ENCODE measurements at regions of chr4 and their contacts with region 1.

Region 1: GRCh38 chr4:150867148-150867547 is 147.9 kb downstream of the LRBA start:
- DNase-seq: peak in 14 of 35 experiments; percentile 3 to 85 (median 22)
- ATAC-seq: peak; percentile 67 to 80 (median 70)
- H3K4me3 ChIP-seq: no peak overlapping the region
- H3K4me3 Mint-ChIP-seq: no peak overlapping the region
- H3K27ac ChIP-seq: no peak overlapping the region
- H3K27ac Mint-ChIP-seq: no peak overlapping the region
- H3K4me1 ChIP-seq: no peaks in the 10 kb centered on the region
- H3K4me1 Mint-ChIP-seq: no peaks in the 10 kb centered on the region
- H3K27me3 ChIP-seq: no peaks in the 10 kb centered on the region
- H3K27me3 Mint-ChIP-seq: no peaks in the 10 kb centered on the region

Region 2: DNA sequence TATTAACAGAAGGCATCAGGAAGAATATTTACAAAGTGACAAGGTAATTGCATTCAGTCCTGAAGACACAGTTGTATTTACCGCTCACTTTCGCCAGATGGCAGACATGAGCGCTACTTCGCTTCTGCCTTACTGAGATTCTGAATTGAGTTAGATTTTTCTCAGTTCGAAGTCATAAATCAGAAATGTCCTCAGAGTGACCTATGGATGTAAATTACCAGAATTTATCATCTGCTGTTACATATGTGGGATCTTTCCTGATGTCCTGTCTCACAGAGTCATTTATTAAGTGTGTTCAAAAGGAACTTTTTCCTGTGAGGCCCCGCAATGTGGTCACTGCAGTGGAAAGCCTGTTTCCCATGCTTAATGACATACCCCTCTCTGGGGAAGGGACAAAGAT is 886.2 kb before region 1 on chr4:
- CTCF ChIA-PET with region 1: interaction called, 7 to 38 read pairs
- POLR2A ChIA-PET with region 1: no interaction called
- DNase-seq: peak in 27 of 35 experiments; percentile 1 to 63 (median 20)
- ATAC-seq: peak in 2 of 4 experiments; percentile 47 to 56
- H3K4me3 ChIP-seq: no peak overlapping the region
- H3K4me3 Mint-ChIP-seq: no peak overlapping the region
- H3K27ac ChIP-seq: no peak overlapping the region
- H3K27ac Mint-ChIP-seq: no peak overlapping the region
- H3K4me1 ChIP-seq: no peaks in the 10 kb centered on the region
- H3K4me1 Mint-ChIP-seq: peaks cover 0 to 5% (median 4%) of the 10 kb centered on the region in 3 donors
- H3K27me3 ChIP-seq: peaks cover 0 to 2% of the 10 kb centered on the region in 2 experiments
- H3K27me3 Mint-ChIP-seq: no peaks in the 10 kb centered on the region

Region 3: GRCh38 chr4:150297861-150298474 is 569.2 kb before region 1 on chr4:
- CTCF ChIA-PET with region 1: interaction called, 6 to 39 read pairs
- POLR2A ChIA-PET with region 1: no interaction called
- DNase-seq: peak in 11 of 35 experiments; percentile 1 to 44 (median 13)
- ATAC-seq: peak in 1 of 4 experiments; percentile 36
- H3K4me3 ChIP-seq: no peak overlapping the region
- H3K4me3 Mint-ChIP-seq: no peak overlapping the region
- H3K27ac ChIP-seq: no peak overlapping the region
- H3K27ac Mint-ChIP-seq: no peak overlapping the region
- H3K4me1 ChIP-seq: no peaks in the 10 kb centered on the region
- H3K4me1 Mint-ChIP-seq: peaks cover 3 to 6% (median 6%) of the 10 kb centered on the region in 3 donors
- H3K27me3 ChIP-seq: no peaks in the 10 kb centered on the region
- H3K27me3 Mint-ChIP-seq: no peaks in the 10 kb centered on the region

Region 4: DNA sequence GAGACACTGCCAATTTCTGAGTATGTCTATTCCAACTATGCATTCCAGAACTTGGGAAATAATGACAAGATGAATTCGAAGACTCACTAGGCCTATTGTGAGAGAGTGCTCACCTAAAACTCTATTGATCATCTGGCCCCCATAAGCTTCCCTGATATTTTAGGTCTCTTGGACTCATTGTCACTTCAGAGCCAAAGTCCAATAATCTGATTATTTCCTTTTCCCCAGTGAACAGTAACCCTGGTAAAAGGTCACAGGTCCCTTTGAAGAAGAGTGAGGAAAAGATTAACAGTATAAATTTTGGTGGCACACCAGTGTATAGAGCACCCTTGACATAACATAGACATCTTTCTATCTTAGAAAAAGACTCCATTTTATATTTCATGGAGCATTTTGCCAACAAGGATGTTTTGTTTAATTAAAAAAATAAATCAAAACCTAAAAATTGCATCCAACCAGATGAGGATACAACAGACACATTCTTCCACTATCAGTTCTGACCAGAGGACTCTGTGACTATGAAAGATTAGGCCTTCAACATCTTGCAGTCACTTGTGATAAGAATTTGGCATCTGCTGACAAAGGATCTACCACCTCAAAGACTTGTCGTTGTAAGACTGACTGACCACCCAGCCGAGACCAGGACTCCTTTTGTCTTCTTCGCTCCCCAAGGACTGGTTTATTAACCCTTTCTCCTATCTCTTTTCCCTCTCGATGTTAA is 93.3 kb before region 1 on chr4:
- CTCF ChIA-PET with region 1: no interaction called
- POLR2A ChIA-PET with region 1: no interaction called
- DNase-seq: no peak
- ATAC-seq: no peak
- H3K4me3 ChIP-seq: no peak overlapping the region
- H3K4me3 Mint-ChIP-seq: no peak overlapping the region
- H3K27ac ChIP-seq: no peak overlapping the region
- H3K27ac Mint-ChIP-seq: no peak overlapping the region
- H3K4me1 ChIP-seq: no peaks in the 10 kb centered on the region
- H3K4me1 Mint-ChIP-seq: peaks cover 3 to 11% (median 7%) of the 10 kb centered on the region in 3 donors
- H3K27me3 ChIP-seq: no peaks in the 10 kb centered on the region
- H3K27me3 Mint-ChIP-seq: no peaks in the 10 kb centered on the region

Region 5: GRCh38 chr4:150818661-150819060 is 48.5 kb before region 1 on chr4:
- CTCF ChIA-PET with region 1: interaction called, 4 to 12 read pairs
- POLR2A ChIA-PET with region 1: no interaction called
- DNase-seq: no peak
- ATAC-seq: no peak
- H3K4me3 ChIP-seq: no peak overlapping the region
- H3K4me3 Mint-ChIP-seq: no peak overlapping the region
- H3K27ac ChIP-seq: no peak overlapping the region
- H3K27ac Mint-ChIP-seq: no peak overlapping the region
- H3K4me1 ChIP-seq: peaks cover 0 to 3% of the 10 kb centered on the region in 2 experiments
- H3K4me1 Mint-ChIP-seq: peaks cover 4 to 17% (median 11%) of the 10 kb centered on the region in 3 donors
- H3K27me3 ChIP-seq: no peaks in the 10 kb centered on the region
- H3K27me3 Mint-ChIP-seq: no peaks in the 10 kb centered on the region

Region 6: DNA sequence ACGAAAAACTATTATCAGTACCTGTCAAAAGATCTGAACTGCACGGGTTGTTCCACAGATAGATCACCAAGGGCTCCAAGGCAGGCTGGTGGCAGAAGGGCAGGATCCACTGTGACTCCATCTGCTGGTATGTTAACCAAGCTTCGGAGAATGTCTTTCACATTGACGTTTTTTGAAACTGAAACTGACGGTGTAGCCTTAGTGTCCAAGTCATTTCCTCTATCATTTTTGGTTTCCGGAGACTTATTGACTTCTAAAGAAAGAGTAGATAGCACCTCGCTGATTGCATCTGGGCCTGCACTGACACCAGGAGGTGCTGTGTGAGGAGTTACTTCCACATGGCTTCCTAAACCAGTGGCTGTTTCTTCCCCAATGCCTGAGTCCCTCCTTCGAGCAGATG is 39.0 kb before region 1 on chr4:
- CTCF ChIA-PET with region 1: interaction called, 5 to 19 read pairs
- POLR2A ChIA-PET with region 1: interaction called in 1 of 2 experiments, 3 read pairs
- DNase-seq: peak in 34 of 35 experiments; percentile 5 to 81 (median 46)
- ATAC-seq: peak; percentile 67 to 94 (median 82)
- H3K4me3 ChIP-seq: peak overlapping the region in 1 of 2 donors; percentile 48
- H3K4me3 Mint-ChIP-seq: peak overlapping the region; percentile 33 to 71 (median 68)
- H3K27ac ChIP-seq: peak overlapping the region; percentile 83
- H3K27ac Mint-ChIP-seq: peak overlapping the region; percentile 78 to 88
- H3K4me1 ChIP-seq: peaks cover 0 to 18% of the 10 kb centered on the region in 2 experiments
- H3K4me1 Mint-ChIP-seq: peaks cover 30 to 54% (median 52%) of the 10 kb centered on the region in 3 donors
- H3K27me3 ChIP-seq: no peaks in the 10 kb centered on the region
- H3K27me3 Mint-ChIP-seq: no peaks in the 10 kb centered on the region

Region 7: DNA sequence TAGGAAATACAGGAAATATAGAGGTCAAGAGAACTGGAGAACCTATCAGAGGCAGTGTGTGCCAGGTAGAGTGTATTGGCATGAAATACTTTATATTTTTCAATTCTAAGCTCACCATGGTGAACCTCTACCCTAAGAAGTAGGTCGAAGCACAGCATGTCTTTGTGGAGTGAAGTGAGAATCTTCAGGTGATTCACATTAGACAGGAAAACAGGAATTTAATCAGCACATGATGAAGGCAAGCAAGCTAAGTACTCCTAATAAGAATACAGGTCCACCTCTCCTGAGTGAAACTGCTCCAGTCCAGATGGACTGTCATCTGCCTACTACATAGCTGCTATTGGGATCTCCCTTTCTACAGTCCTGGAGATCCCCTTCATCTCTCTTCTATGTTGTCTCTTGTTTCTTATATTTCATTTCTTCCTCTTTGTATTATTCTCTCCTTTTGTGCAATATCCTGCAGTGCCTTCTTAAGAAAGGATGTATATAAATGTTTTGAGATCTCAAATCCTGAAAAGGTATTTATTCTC is 11.1 kb before region 1 on chr4:
- CTCF ChIA-PET with region 1: interaction called, 4 to 10 read pairs
- POLR2A ChIA-PET with region 1: interaction called in 1 of 2 experiments, 3 read pairs
- DNase-seq: no peak
- ATAC-seq: no peak
- H3K4me3 ChIP-seq: no peak overlapping the region
- H3K4me3 Mint-ChIP-seq: no peak overlapping the region
- H3K27ac ChIP-seq: no peak overlapping the region
- H3K27ac Mint-ChIP-seq: no peak overlapping the region
- H3K4me1 ChIP-seq: no peaks in the 10 kb centered on the region
- H3K4me1 Mint-ChIP-seq: peaks cover 0 to 6% (median 0%) of the 10 kb centered on the region in 3 donors
- H3K27me3 ChIP-seq: no peaks in the 10 kb centered on the region
- H3K27me3 Mint-ChIP-seq: no peaks in the 10 kb centered on the region

Region 8: GRCh38 chr4:152535903-152536544 is 1668.9 kb after region 1 on chr4 and contains the start of gene FBXW7:
- CTCF ChIA-PET with region 1: interaction called in 1 of 2 experiments, 10 read pairs
- POLR2A ChIA-PET with region 1: no interaction called
- DNase-seq: peak; percentile 99 to 100 (median 100)
- ATAC-seq: peak; percentile 85 to 86 (median 85)
- H3K4me3 ChIP-seq: peak within 1 kb of the TSS; percentile 88 to 93
- H3K4me3 Mint-ChIP-seq: peak within 1 kb of the TSS; percentile 97 to 98 (median 98)
- H3K27ac ChIP-seq: peak within 1 kb of the TSS; percentile 95
- H3K27ac Mint-ChIP-seq: peak within 1 kb of the TSS; percentile 97 to 100
- H3K4me1 ChIP-seq: peaks cover 33 to 41% of the 10 kb centered on the region in 2 experiments
- H3K4me1 Mint-ChIP-seq: peaks cover 67 to 80% (median 71%) of the 10 kb centered on the region in 3 donors
- H3K27me3 ChIP-seq: no peaks in the 10 kb centered on the region
- H3K27me3 Mint-ChIP-seq: no peaks in the 10 kb centered on the region
- total RNA-seq, gene FBXW7: 91.9 to 131 (median 96.0) TPM